Common myeloid progenitor, CD34-positive (primary cell): ENCODE measurements at regions of chr10 and their contacts with region 1.

Region 1: GRCh38 chr10:95430231-95430951 is 130.8 kb downstream of the SORBS1 start:
- DNase-seq: peak; percentile 49 to 79 (median 76)
- H3K4me3 ChIP-seq: no peak overlapping the region
- H3K27ac ChIP-seq: no peak overlapping the region
- H3K4me1 ChIP-seq: peaks cover 0 to 8% (median 1%) of the 10 kb centered on the region in 4 experiments
- H3K27me3 ChIP-seq: no peaks in the 10 kb centered on the region

Region 2: DNA sequence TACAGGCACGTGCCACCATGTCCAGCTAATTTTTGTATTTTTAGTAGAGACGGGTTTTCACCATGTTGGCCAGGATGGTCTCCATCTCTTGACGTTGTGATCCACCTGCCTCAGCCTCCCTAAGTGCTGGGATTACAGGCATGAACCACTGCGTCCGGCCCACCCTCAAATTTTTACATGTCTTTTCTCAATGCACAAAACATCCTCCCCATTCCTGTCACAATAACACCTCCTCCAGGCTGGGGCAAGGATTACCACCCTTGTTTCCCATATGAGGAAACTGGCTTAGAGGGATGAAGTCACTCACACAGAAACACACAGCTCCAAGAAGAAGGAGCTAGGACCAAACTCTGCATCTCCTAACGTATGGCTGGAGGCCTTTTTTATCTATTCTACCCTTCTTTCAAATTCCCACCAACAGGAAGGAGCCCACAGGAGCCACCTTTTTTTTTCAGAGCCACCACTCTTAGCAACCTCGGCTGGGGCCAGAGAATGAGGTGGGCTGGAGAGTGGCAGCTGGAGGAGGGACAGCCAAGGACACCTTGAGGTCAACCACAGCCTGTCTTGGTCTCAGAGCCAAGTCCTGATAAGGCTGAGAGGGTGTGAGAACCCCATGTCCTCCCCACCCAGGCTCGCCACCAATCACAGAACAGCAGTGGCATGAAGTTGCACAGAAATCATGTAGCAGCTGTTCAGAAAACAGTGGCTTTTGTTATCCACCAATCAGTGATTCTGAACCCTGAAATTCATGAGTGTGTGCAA is 26.5 kb before region 1 on chr10:
- CTCF ChIA-PET with region 1: interaction called, 10 read pairs
- POLR2A ChIA-PET with region 1: no interaction called
- DNase-seq: no peak
- H3K4me3 ChIP-seq: no peak overlapping the region
- H3K27ac ChIP-seq: no peak overlapping the region
- H3K4me1 ChIP-seq: peaks cover 0 to 15% (median 11%) of the 10 kb centered on the region in 4 experiments
- H3K27me3 ChIP-seq: no peaks in the 10 kb centered on the region

Region 3: DNA sequence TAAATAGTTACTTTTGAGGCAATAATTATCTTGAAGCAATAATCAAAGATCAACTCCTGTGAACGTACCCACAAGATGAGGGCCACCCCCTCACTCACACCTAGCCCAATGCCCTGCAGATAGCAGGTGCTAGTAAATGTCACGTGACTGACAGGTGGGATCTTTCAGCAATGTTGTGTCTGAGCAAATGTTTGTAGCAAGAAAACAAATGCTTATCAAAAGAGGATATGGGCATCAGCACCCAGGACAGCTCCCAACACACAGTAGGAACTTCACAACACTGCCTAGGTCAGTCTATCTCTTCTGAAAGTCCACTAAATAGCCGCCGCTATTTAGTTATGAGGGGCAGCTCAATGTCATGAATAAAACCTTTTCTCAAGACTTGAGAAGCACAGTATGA is 18.8 kb before region 1 on chr10:
- CTCF ChIA-PET with region 1: interaction called, 22 read pairs
- POLR2A ChIA-PET with region 1: no interaction called
- DNase-seq: no peak
- H3K4me3 ChIP-seq: no peak overlapping the region
- H3K27ac ChIP-seq: no peak overlapping the region
- H3K4me1 ChIP-seq: peaks cover 0 to 29% (median 11%) of the 10 kb centered on the region in 4 experiments
- H3K27me3 ChIP-seq: no peaks in the 10 kb centered on the region

Region 4: DNA sequence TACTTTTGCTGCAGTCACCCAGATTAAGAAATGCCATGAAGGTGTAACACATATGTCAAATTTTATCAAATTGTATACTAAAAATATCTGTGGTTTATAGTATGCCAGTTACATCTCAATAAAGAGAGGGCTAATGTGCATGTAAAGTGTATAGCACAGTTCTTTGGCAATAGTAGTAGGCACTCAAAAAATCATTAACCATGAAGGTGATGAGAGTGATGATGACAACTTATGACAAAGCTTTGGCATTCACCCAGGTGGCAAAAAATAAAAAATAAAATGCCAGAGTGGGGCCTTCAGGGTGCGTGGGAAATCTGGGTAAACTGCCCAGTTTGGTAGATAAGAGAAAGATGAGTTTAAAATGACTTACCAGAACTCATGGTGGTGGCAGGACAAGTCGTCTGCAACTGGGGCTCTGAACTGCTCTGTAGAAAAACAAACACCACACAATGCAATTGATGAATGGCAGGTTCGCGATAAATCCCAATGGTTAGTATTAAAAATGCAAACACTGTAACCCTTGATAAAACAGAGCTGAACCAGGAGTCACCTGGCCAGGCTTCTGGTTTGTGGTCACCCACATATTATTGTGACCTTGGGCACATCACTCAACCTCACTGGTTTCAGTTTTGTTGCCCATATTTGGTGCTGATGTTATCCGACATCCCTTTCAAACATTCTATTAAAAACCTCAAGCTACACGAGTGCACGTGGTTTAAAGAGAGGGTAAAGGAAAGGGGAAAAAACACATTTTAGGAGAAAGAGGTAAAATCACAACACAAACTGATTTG is 10.6 kb after region 1 on chr10:
- CTCF ChIA-PET with region 1: interaction called, 54 read pairs
- POLR2A ChIA-PET with region 1: no interaction called
- DNase-seq: peak in 2 of 3 donors; percentile 34 to 35
- H3K4me3 ChIP-seq: no peak overlapping the region
- H3K27ac ChIP-seq: no peak overlapping the region
- H3K4me1 ChIP-seq: peaks cover 0 to 5% (median 2%) of the 10 kb centered on the region in 4 experiments
- H3K27me3 ChIP-seq: no peaks in the 10 kb centered on the region

Region 5: GRCh38 chr10:95445837-95446486 is 15.6 kb after region 1 on chr10:
- CTCF ChIA-PET with region 1: interaction called, 54 read pairs
- POLR2A ChIA-PET with region 1: no interaction called
- DNase-seq: peak; percentile 75 to 86 (median 83)
- H3K4me3 ChIP-seq: no peak overlapping the region
- H3K27ac ChIP-seq: no peak overlapping the region
- H3K4me1 ChIP-seq: peaks cover 0 to 9% (median 2%) of the 10 kb centered on the region in 4 experiments
- H3K27me3 ChIP-seq: no peaks in the 10 kb centered on the region

Region 6: GRCh38 chr10:95499482-95499989 is 69.1 kb after region 1 on chr10:
- CTCF ChIA-PET with region 1: no interaction called
- POLR2A ChIA-PET with region 1: no interaction called
- DNase-seq: no peak
- H3K4me3 ChIP-seq: no peak overlapping the region
- H3K27ac ChIP-seq: no peak overlapping the region
- H3K4me1 ChIP-seq: peaks cover 0 to 19% (median 8%) of the 10 kb centered on the region in 4 experiments
- H3K27me3 ChIP-seq: no peaks in the 10 kb centered on the region

Region 7: GRCh38 chr10:95601116-95601719 is 170.8 kb after region 1 on chr10:
- CTCF ChIA-PET with region 1: interaction called, 93 read pairs
- POLR2A ChIA-PET with region 1: interaction called, 3 read pairs
- DNase-seq: peak; percentile 79 to 83 (median 79)
- H3K4me3 ChIP-seq: no peak overlapping the region
- H3K27ac ChIP-seq: no peak overlapping the region
- H3K4me1 ChIP-seq: no peaks in the 10 kb centered on the region
- H3K27me3 ChIP-seq: no peaks in the 10 kb centered on the region